Mucosa of descending colon (tissue), 3 donors: ENCODE measurements at regions of chr14 and their contacts with region 1.

Region 1: DNA sequence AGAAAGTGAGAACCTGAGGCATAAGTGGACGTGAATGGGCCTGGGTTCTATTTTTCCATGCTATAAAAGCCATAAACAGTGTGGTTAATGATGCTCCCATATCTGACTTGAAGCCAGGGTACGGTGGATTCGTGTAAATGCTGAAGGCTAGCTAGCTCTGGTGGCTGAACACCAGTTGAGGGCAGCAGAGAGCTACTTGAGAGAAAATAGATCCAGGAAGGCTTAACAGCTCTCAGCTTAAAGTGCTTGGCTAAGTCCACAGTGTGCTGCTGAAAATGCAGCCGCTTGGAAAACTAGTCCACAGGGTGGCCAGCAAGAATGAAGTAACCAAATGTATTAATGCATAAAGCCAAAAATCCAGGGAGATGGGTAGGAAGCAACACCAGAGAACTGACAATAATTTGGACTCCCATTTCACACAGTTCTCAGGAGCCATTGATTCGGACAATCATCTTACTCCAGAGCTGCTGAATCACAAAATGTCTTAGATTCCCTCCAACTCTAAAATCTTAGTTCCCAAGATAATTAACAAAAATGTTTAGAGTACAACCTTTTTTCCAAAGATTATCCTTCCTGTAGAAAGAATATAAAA is 15.0 kb upstream of the FOXG1 start:
- DNase-seq: peak in 1 of 3 donors; percentile 57
- ATAC-seq: peak; percentile 57
- H3K4me3 ChIP-seq: no peak overlapping the region
- H3K4me1 ChIP-seq: no peaks in the 10 kb centered on the region
- CTCF ChIP-seq: peak; percentile 17

Region 2: GRCh38 chr14:28577711-28578131 is 173.8 kb before region 1 on chr14:
- intact Hi-C with region 1: no loop called
- DNase-seq: no peak
- ATAC-seq: no peak
- H3K4me3 ChIP-seq: no peak overlapping the region
- H3K4me1 ChIP-seq: no peaks in the 10 kb centered on the region
- CTCF ChIP-seq: no peak

Region 3: GRCh38 chr14:29166507-29166906 is 414.9 kb after region 1 on chr14:
- intact Hi-C with region 1: no loop called
- DNase-seq: no peak
- ATAC-seq: no peak
- H3K4me3 ChIP-seq: no peak overlapping the region
- H3K4me1 ChIP-seq: no peaks in the 10 kb centered on the region
- CTCF ChIP-seq: no peak

Region 4: GRCh38 chr14:29536886-29537511 is 785.4 kb after region 1 on chr14:
- intact Hi-C with region 1: loop called in 1 of 2 experiments (anchors 10 kb)
- DNase-seq: no peak
- ATAC-seq: no peak
- H3K4me3 ChIP-seq: no peak overlapping the region
- H3K4me1 ChIP-seq: no peaks in the 10 kb centered on the region
- CTCF ChIP-seq: no peak